Astrocyte of the cerebellum (primary cell): ENCODE measurements at regions of chr2 and their contacts with region 1.

Region 1: DNA sequence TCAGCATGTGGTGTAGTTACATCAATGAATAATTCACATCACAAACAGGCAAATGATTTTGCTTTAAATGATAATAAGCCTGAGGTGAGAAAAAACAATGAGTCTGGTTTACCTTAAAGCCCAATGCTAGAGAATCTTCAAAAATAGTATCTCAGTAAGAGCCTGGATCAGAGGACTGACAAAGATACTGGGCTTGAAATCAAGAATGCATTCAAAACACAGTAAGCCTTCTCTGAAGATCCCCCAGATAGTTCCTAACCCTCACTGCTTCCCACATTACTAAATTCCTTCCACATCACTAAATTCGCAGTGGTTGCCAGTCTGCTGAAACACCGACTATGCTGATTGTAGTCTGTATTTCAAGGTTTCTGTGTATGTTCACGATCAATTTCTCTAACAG is 514.9 kb downstream of the SUCLG1 start:
- DNase-seq: no peak
- H3K4me3 ChIP-seq: no peak overlapping the region
- CTCF ChIP-seq: no peak

Region 2: GRCh38 chr2:83899271-83899670 is 44.9 kb before region 1 on chr2:
- in situ Hi-C with region 1: no loop called
- DNase-seq: no peak
- H3K4me3 ChIP-seq: no peak overlapping the region
- CTCF ChIP-seq: no peak

Region 3: GRCh38 chr2:83991992-83992391 is 47.8 kb after region 1 on chr2:
- in situ Hi-C with region 1: loop called (anchors 5 kb)
- DNase-seq: no peak
- H3K4me3 ChIP-seq: no peak overlapping the region
- CTCF ChIP-seq: no peak

Region 4: DNA sequence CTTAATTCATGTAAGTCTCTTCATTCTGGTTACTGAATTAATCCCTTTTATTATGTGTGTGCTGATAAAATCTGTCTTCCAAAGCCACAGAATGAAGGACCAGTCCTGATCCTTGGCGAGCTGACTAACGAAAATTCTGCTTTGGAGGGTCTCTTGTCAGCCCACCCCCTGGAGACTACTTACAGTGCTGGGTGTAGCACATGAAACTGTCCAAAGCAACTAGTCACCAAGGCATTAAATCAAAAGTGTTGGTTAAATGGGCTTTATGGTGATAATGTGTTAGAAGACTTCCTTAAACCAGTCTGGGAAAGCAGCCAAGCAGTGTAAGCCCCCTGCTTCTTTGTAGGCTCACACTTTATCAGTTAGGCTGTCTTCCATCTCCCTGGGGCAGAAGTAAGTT is 94.7 kb after region 1 on chr2:
- in situ Hi-C with region 1: no loop called
- DNase-seq: peak; percentile 5
- H3K4me3 ChIP-seq: no peak overlapping the region
- CTCF ChIP-seq: no peak

Region 5: DNA sequence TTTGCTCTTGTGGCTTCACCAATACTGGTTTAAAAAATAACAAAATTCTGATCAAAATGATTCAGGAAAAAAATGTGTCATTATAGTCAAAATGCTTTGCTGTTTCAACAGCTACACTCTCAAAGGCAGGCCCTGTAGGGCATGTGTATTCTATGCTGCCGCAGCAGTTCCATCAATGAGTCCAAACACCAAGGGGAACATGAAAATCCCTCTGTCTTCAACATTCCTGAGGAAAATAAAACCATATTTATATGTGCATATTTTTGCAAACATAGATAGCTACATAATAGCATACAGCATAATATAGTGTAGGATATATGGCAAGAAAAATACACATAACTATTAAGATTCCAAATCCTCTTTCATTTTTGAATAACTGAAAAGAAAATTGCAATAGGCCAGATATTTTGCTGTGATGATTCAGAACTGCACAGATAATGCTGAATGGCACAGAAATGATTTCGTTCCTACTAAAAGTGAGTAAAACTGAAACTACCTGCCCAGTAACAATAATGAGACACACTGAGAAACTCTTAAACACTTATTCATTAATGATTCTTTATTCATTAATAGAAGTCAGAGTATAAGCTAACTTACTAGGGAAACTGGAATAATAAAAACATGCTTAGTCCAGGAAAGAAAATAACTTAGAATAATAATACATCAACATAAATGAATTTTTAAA is 171.1 kb after region 1 on chr2:
- in situ Hi-C with region 1: no loop called
- DNase-seq: no peak
- H3K4me3 ChIP-seq: no peak overlapping the region
- CTCF ChIP-seq: no peak